ENCODE measurements at regions of chr6 and their contacts with region 1.

Region 1: DNA sequence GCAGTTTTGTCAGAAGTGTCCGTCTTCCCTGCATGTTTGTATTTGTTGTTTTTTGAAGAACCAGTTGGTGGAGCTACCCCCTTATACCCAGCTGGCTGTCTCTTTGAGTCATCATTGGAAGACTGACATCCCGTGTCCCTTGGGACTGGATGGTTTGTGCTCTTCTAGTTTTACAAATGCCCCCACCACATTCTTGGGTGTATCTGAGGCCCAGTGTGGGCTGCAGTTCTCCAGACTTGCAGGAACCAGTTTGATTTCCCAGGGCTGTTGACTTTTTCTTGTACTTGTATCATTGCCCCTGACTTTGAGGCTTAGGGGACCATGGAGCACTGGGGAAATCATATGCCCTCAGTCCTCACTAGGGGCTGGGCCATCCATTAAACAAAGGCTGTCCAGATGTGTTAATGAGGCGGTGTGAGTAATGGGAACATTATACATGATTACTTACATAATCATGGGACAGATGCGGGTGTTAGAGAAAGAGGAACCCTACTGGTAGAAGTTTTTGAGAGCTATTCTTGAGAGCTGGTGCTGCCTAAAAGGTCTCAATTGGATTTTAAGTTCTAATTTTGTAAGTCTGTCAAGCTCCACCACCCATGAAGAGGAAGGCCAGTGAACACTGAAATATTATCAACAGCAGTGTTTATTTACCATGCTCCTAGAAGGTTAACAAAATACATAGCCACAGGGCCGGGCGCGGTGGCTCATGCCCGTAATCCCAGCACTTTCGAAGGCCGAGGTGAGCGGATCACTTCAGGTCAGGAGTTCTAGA is 8.4 kb downstream of the JARID2 start:
- DNase-seq: no peak
- ATAC-seq: no peak

Region 2: DNA sequence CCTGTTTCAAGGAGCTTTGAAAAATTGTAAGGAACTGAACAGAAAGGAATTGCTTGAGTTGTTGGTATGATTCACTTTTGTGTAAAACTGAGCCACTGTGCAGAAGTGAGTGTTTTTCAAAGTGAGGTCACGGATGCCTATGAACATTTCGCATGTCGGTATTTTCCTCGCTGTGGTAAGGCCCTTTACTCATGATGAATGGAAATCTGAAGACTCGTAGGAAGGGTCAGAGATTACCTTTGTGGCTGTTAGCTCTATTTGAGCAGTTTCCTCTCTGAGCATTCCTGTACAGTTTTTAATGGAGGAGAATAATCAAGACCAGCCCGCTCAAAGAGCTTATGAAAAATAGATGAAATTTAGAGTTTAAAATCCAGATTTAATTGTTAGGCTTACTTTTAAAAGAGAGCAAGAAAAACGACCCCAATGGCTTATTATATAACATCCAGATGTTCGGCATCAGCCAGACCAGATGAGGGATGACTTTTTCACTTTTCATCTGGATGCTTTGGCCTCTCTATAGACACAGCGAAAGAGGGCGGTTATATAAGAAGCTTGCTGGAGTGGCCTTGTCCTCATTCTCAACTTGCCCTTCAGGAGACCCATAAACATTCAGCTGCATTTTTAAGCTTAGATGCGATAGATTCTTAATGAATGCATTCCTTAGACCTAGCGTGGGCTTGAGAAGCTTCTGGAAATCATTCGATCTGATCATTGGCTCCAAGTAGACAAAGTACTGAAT is 1037.1 kb before region 1 on chr6:
- intact Hi-C with region 1: no loop called
- DNase-seq: no peak
- ATAC-seq: no peak

Region 3: GRCh38 chr6:15317934-15318902 is 64.0 kb after region 1 on chr6:
- intact Hi-C with region 1: loop called (anchors 2 kb)
- DNase-seq: no peak
- ATAC-seq: peak; percentile 81

Region 4: DNA sequence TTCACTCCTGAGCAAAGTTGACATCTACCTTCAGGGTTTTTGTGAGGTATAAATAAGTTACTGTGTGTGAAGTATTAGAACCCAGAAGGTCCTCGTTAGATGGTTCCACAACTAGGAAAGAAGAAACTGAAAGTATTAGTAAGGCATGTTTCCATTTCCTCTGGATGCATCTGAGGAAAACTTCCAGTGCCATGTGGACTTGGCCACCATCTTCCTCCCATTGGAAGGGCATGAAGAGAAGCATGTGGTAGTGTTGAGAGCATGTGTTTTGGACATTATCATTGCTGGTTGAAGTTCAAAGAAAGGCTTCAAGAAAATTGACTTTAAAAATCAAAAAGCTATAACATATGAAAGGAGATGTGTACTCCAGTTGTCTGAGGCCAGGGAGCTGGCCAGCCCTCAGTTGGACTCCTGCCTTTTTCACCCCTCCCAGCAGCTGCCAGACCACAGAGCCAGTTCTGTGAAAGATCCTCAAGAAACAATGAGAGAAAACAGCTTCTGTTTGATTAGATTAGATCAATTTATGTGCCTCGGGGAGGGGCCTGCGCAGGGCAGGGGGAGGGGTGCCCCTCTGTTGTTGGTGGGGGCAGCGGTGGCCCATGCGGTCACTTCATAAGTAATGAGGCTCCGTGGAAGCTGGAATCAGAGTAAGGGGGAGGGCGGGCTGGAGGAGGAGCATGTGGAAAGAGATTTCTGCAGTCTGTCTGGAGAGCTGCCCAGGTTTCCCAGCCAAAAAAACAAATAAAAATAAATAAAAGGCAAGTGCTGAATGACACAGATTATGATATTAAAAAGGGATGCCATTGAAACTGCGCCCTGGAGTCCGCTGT is 145.6 kb after region 1 on chr6:
- intact Hi-C with region 1: no loop called
- DNase-seq: peak; percentile 84
- ATAC-seq: peak; percentile 90